Panc1 (cell line): ENCODE measurements at regions of chr5 and their contacts with region 1.

Region 1: DNA sequence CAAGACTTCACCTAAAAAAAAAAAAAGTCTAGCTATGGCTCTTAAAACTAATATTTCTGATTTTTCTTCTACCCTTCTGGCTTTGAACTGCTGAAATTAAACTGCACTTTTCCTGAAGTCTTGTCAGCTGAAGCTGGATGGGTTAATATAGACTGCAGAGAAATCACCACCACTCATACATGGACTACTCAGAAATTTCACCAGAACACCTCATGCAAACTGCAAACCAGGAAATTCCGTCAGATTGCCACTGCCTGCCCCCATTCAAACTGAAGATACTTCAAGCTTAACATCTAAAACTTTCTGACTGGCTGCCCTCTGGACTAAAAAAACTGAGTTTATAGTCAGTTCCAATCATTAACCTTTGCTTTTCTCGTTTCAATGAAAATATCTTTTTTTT is 11.5 kb upstream of the ANXA2R start:
- DNase-seq: no peak
- ATAC-seq: no peak
- H3K4me3 ChIP-seq: no peak overlapping the region
- H3K27ac ChIP-seq: no peak overlapping the region
- H3K4me1 ChIP-seq: peaks cover 9% of the 10 kb centered on the region; the same call in 1 of the 2 replicates
- H3K27me3 ChIP-seq: no peaks in the 10 kb centered on the region
- CTCF ChIP-seq: no peak

Region 2: DNA sequence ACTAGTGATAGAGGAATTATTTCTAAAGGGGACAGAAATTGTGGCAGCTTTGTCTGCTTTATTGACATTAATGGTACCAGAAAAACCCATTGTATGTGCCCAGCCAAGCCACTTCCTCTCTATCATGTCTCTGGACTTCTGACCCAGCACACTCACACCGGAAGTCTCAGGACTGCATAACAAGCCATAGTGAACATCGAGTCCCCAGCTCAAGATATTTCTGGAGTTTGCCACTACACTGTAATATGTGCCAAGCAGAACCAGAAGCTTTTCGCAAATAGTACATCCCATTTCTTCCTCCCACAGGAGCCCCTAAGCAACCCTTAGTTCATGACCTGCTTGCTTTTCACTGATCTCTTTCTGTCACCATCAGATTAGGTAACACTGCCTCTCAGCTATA is 815.8 kb before region 1 on chr5:
- CTCF ChIA-PET with region 1: no interaction called
- POLR2A ChIA-PET with region 1: no interaction called
- in situ Hi-C with region 1: no loop called
- intact Hi-C with region 1: no loop called
- DNase-seq: no peak
- ATAC-seq: no peak
- H3K4me3 ChIP-seq: no peak overlapping the region
- H3K27ac ChIP-seq: no peak overlapping the region
- H3K4me1 ChIP-seq: no peaks in the 10 kb centered on the region
- H3K27me3 ChIP-seq: no peaks in the 10 kb centered on the region
- CTCF ChIP-seq: no peak

Region 3: GRCh38 chr5:43066799-43067741 is 15.4 kb after region 1 on chr5:
- CTCF ChIA-PET with region 1: no interaction called
- POLR2A ChIA-PET with region 1: interaction called, 10 read pairs
- in situ Hi-C with region 1: no loop called
- intact Hi-C with region 1: no loop called
- DNase-seq: peak; percentile 86
- ATAC-seq: peak; percentile 74
- H3K4me3 ChIP-seq: peak overlapping the region; percentile 62 to 94
- H3K27ac ChIP-seq: peak overlapping the region; percentile 100
- H3K4me1 ChIP-seq: peaks cover 13% of the 10 kb centered on the region
- H3K27me3 ChIP-seq: no peaks in the 10 kb centered on the region
- CTCF ChIP-seq: no peak